ENCODE measurements at regions of chr11 and their contacts with region 1.

Region 1: GRCh38 chr11:119728651-119729580 is at the start of gene NECTIN1:
- DNase-seq: peak; percentile 96
- H3K4me3 ChIP-seq: peak within 1 kb of the TSS; percentile 84 to 87
- H3K27ac ChIP-seq: peak within 1 kb of the TSS; percentile 74 to 97
- H3K4me1 ChIP-seq: peaks cover 6 to 47% of the 10 kb centered on the region in 2 experiments; a peak in 2 of 4 replicates
- H3K27me3 ChIP-seq: no peaks in the 10 kb centered on the region
- CTCF ChIP-seq: peak; percentile 93
- EP300 ChIP-seq: no peak
- RAD21 ChIP-seq: peak; percentile 78
- polyA plus RNA-seq, gene NECTIN1: 6.7 and 9.1 TPM in 2 replicates

Region 2: DNA sequence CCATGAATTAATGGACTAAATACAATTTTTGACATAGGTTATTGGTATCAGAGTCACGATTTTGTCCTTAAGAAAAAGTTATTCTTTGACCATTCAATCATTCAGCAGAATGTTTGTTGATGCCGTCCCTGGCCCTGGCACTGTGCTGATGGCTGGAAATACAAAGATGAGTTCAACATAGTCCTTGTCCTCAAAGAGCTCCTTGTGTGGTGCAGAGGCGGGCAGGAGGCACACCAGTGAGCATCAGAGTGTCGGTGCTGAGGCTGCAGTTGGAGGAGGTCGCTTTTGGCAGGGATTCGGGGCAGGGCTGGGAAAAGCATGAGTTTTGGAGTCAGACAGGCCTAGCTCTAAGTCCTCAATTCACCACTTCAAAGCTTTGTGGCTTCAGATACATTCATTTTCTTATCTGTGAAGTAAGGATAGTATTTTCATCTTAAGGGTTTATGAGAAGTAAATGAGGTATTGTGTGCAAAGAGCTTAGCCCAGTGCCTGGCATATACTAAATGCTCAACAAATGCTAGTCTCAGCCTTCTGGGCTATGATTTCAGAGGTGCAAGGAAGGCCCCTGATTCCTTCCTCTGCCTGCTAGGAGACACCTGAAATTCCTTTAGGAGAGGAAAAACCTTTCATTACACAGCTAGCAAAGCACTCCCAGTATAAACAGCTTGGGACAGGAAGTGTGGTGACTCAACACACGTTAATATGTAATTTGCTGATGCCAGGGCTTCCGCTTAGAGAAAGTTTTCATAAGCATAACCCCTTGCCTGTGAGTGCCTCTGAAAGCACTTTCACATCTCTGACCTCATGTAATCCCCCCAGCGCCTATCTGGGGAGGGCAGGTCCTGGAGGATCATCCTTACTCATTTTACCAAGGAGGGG is 113.7 kb before region 1 on chr11:
- CTCF ChIA-PET with region 1: no interaction called
- POLR2A ChIA-PET with region 1: no interaction called
- DNase-seq: no peak
- H3K4me3 ChIP-seq: no peak overlapping the region
- H3K27ac ChIP-seq: peak overlapping the region in 1 of 2 experiments; percentile 74; a peak in 2 of 4 replicates
- H3K4me1 ChIP-seq: peaks cover 0 to 15% of the 10 kb centered on the region in 2 experiments; a peak in 2 of 4 replicates
- H3K27me3 ChIP-seq: no peaks in the 10 kb centered on the region
- CTCF ChIP-seq: no peak
- EP300 ChIP-seq: peak in 1 of 2 experiments; percentile 24; a peak in 1 of 4 replicates
- RAD21 ChIP-seq: no peak

Region 3: GRCh38 chr11:119640541-119640940 is 88.4 kb before region 1 on chr11:
- CTCF ChIA-PET with region 1: interaction called, 12 read pairs
- POLR2A ChIA-PET with region 1: no interaction called
- DNase-seq: no peak
- H3K4me3 ChIP-seq: no peak overlapping the region
- H3K27ac ChIP-seq: no peak overlapping the region
- H3K4me1 ChIP-seq: peaks cover 0 to 26% of the 10 kb centered on the region in 2 experiments; a peak in 1 of 4 replicates
- H3K27me3 ChIP-seq: no peaks in the 10 kb centered on the region
- CTCF ChIP-seq: no peak
- EP300 ChIP-seq: no peak
- RAD21 ChIP-seq: no peak

Region 4: GRCh38 chr11:119673759-119674336 is 55.1 kb before region 1 on chr11:
- CTCF ChIA-PET with region 1: interaction called, 44 read pairs
- POLR2A ChIA-PET with region 1: interaction called, 17 read pairs
- DNase-seq: no peak
- H3K4me3 ChIP-seq: no peak overlapping the region
- H3K27ac ChIP-seq: peak overlapping the region in 1 of 2 experiments; percentile 93; a peak in 1 of 4 replicates
- H3K4me1 ChIP-seq: peaks cover 10 to 35% of the 10 kb centered on the region in 2 experiments; a peak in 2 of 4 replicates
- H3K27me3 ChIP-seq: no peaks in the 10 kb centered on the region
- CTCF ChIP-seq: no peak
- EP300 ChIP-seq: no peak
- RAD21 ChIP-seq: 0 out of 2 replicates have a peak, but pooled peaks have one; percentile 15

Region 5: DNA sequence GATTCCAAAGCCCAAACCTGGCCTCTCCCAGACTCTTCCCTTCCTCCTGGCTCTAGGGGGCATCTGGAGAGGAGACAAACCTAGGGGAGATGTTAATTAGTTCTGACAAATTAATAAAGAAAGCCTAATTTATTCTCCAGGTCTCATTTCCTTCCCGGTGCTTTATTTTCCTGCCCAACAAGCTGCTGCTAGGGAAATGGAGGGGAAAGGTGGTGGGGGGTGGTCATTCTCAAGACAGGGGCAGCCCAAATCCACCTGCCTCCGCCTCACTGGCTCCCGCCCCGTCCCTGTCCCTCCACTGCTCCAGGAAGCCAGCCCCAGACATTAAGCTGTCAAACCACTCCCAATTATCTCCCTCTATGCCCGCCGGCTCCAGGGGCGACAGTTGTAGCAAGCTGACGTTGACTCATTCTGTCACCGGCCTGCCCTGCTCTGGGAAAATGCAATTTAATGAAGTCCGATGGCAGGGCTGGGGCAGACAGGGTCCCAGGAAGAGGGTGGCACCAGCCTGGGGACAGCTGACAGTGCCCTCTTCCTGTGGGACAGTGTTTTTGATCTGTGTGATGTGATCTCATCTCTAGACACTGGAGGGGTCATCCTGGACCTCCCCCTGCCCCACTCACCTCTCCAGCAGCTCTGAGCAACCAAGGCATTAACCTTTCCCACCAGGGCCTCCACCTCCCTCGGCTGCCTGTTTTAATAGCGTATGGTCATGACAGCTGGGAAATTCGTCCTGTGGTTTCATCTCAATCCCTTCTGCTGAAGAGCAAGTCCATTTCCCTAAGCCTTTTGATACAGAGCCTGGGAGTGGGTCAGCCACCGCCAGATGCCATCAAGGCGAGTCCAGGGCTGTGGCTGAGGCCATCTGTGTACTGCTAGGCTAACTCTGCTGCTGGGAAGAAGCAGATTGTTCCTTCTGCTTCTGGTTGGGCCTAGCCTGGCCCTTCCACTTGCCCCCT is 27.0 kb before region 1 on chr11:
- CTCF ChIA-PET with region 1: interaction called, 77 read pairs
- POLR2A ChIA-PET with region 1: interaction called, 10 read pairs
- DNase-seq: peak; percentile 88
- H3K4me3 ChIP-seq: no peak overlapping the region
- H3K27ac ChIP-seq: peak overlapping the region; percentile 30 to 96
- H3K4me1 ChIP-seq: peaks cover 4 to 89% of the 10 kb centered on the region in 2 experiments; a peak in 2 of 4 replicates
- H3K27me3 ChIP-seq: no peaks in the 10 kb centered on the region
- CTCF ChIP-seq: no peak
- EP300 ChIP-seq: peak in 1 of 2 experiments; percentile 71; a peak in 2 of 4 replicates
- RAD21 ChIP-seq: peak; percentile 37

Region 6: GRCh38 chr11:119747868-119748660 is 19.1 kb after region 1 on chr11:
- CTCF ChIA-PET with region 1: interaction called, 22 read pairs
- POLR2A ChIA-PET with region 1: interaction called, 4 read pairs
- DNase-seq: no peak
- H3K4me3 ChIP-seq: no peak overlapping the region
- H3K27ac ChIP-seq: no peak overlapping the region
- H3K4me1 ChIP-seq: peaks cover 0 to 17% of the 10 kb centered on the region in 2 experiments; a peak in 2 of 4 replicates
- H3K27me3 ChIP-seq: peaks cover 16% of the 10 kb centered on the region
- CTCF ChIP-seq: no peak
- EP300 ChIP-seq: no peak
- RAD21 ChIP-seq: no peak

Region 7: DNA sequence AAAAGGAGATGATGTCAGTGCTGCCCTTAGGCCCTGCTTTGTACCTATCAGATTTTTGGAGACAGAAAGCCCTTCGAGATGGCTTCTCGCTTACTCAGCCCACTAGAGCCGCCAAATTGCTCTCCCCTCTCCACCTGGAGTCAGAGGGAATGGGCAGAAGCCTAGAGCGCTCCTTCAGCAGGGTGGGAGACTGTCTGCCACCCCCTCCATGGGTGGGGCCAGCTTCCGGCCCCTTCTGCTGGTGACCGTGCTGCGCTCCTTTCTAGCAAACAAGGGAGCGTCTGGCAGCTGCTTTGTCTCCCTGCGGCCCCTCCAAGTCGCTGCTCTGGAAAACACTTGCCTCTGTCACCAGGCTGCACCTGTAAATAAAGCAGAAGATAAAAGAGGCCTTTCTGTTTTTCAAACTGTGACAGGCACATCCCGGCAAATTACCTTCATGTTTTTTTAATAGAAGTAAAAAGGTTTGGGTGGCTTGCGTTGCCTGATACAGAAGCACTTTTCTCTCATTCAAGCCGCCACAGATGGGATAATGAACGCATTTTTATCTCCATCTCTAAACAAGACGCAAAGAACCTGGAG is 145.8 kb after region 1 on chr11:
- CTCF ChIA-PET with region 1: interaction called, 10 read pairs
- POLR2A ChIA-PET with region 1: interaction called, 3 read pairs
- DNase-seq: peak; percentile 64
- H3K4me3 ChIP-seq: no peak overlapping the region
- H3K27ac ChIP-seq: peak overlapping the region in 1 of 2 experiments; percentile 97; a peak in 2 of 4 replicates
- H3K4me1 ChIP-seq: peaks cover 0 to 70% of the 10 kb centered on the region in 2 experiments; a peak in 2 of 4 replicates
- H3K27me3 ChIP-seq: peaks cover 12% of the 10 kb centered on the region; the same call in 1 of the 2 replicates
- CTCF ChIP-seq: no peak
- EP300 ChIP-seq: peak in 1 of 2 experiments; percentile 69; a peak in 1 of 4 replicates
- RAD21 ChIP-seq: peak; percentile 2; the same call in 1 of the 2 replicates